ENCODE measurements at regions of chr18 and their contacts with region 1.

Region 1: GRCh38 chr18:32470713-32471633 is at the start of gene GAREM1:
- DNase-seq: peak; percentile 96 to 98
- H3K4me3 ChIP-seq: peak within 1 kb of the TSS; percentile 70 to 94
- H3K27ac ChIP-seq: peak within 1 kb of the TSS; percentile 80 to 92
- H3K4me1 ChIP-seq: peaks cover 0 to 32% (median 13%) of the 10 kb centered on the region in 4 donors
- H3K27me3 ChIP-seq: no peaks in the 10 kb centered on the region
- CTCF ChIP-seq: peak; percentile 77 to 91

Region 2: GRCh38 chr18:32092422-32093101 is 378.4 kb before region 1 on chr18:
- intact Hi-C with region 1: loop called (anchors 10 kb)
- DNase-seq: peak; percentile 98 to 100
- H3K4me3 ChIP-seq: peak overlapping the region; percentile 86 to 90
- H3K27ac ChIP-seq: peak overlapping the region; percentile 100
- H3K4me1 ChIP-seq: peaks cover 0 to 30% (median 19%) of the 10 kb centered on the region in 4 donors
- H3K27me3 ChIP-seq: no peaks in the 10 kb centered on the region
- CTCF ChIP-seq: no peak

Region 3: GRCh38 chr18:32158108-32158624 is 312.8 kb before region 1 on chr18:
- intact Hi-C with region 1: loop called (anchors 2 kb)
- DNase-seq: peak; percentile 82 to 87
- H3K4me3 ChIP-seq: peak overlapping the region; percentile 28 to 39
- H3K27ac ChIP-seq: no peak overlapping the region
- H3K4me1 ChIP-seq: peaks cover 0 to 6% (median 0%) of the 10 kb centered on the region in 4 donors
- H3K27me3 ChIP-seq: no peaks in the 10 kb centered on the region
- CTCF ChIP-seq: peak; percentile 79 to 91

Region 4: DNA sequence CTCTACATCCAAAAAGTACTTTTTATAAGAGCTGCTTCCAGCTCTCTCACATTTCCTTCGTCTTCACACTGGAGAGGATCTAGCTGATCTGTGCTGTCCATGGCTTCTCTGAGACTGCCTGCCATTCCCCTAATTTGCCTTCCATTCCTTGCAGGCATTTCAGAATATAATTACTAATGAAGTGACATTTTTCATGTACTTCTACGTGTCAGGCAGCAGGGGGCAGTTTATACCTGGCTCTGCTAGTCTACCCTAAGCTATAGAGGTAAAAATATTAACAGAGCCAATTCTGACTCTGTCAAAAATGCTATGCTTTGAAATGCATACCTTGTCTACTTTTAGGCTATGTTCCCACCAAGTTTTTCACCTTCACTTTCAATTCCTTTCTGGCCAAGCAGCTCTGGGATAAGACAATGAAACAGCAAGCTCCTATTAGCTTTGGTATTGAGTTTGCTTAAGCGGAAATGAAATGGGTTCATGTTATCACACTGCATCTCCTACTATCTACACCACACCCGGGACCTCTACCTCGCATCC is 199.2 kb before region 1 on chr18:
- intact Hi-C with region 1: loop called (anchors 1 kb)
- DNase-seq: no peak
- H3K4me3 ChIP-seq: no peak overlapping the region
- H3K27ac ChIP-seq: peak overlapping the region in 1 of 2 donors; percentile 11
- H3K4me1 ChIP-seq: peaks cover 0 to 18% (median 13%) of the 10 kb centered on the region in 4 donors
- H3K27me3 ChIP-seq: no peaks in the 10 kb centered on the region
- CTCF ChIP-seq: peak; percentile 68 to 79

Region 5: DNA sequence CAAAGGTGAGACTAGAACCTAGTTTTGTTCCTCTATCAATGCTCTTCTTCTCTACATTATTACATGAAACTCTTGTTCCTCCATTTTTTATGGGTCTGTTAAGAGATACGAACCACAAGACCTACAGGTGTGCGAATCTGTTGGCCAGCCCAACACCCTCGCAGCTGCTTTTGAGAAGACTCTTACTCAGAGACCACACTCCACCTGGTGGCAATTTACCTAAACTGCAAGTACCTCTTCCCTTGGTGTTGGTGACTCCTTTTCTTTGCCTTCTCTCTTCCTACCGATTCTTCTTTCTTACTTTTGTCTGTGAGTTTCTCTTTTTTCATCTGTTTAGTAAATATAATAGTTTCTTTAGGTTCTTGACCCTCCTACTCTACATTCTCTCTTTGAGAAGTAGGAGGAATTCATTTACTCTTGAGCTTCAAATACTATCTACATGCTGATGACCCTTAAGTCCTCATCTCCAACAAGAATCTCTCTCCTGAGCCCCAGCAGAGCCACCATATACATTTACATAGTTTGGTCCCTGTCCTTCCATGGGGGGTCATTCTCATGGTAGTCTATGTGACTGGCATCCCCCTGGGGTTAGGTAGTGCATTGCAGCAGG is 81.6 kb after region 1 on chr18:
- intact Hi-C with region 1: loop called (anchors 10 kb)
- DNase-seq: peak in 1 of 2 donors; percentile 34
- H3K4me3 ChIP-seq: no peak overlapping the region
- H3K27ac ChIP-seq: no peak overlapping the region
- H3K4me1 ChIP-seq: no peaks in the 10 kb centered on the region
- H3K27me3 ChIP-seq: no peaks in the 10 kb centered on the region
- CTCF ChIP-seq: peak; percentile 66 to 71

Measured in tibial artery (tissue), 4 donors.